ENCODE measurements at regions of chr17 and their contacts with region 1.

Region 1: DNA sequence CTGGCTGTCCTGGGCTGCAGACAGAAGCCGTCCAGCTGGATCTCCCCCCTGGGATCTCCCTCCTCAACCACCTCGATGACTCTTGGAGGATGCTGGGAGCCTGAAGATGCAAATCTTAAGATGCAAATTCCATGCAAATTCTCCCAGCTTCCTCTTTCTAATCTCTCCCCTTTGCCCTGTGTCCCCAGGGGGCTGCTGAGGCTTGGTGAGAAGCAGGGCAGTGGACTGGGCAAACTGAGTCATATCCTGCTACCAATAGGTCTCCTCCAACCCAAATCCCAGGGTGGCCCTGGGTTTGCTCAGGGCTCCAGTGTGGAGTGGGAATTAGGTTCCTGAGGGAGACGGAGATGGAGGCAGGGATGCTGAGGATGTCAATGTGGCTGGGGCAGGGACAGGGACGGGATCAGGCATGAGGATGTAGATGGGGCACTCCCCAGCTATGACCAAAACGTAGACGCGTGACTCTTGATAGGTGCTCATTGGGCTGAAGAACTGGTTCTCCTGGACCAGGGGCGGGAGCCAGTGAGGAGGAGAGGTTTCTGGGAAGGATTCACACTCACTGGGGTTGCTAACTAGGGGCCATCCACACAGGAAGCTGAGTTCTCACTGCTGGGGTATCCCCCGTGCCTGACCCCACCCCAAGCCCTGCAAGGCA is 3.6 kb upstream of the ALOX12B start:
- DNase-seq: no peak
- ATAC-seq: no peak
- H3K4me3 Mint-ChIP-seq: no peak overlapping the region
- H3K27ac Mint-ChIP-seq: no peak overlapping the region
- H3K4me1 Mint-ChIP-seq: peaks cover 6% of the 10 kb centered on the region
- H3K27me3 Mint-ChIP-seq: peaks cover 31% of the 10 kb centered on the region

Region 2: DNA sequence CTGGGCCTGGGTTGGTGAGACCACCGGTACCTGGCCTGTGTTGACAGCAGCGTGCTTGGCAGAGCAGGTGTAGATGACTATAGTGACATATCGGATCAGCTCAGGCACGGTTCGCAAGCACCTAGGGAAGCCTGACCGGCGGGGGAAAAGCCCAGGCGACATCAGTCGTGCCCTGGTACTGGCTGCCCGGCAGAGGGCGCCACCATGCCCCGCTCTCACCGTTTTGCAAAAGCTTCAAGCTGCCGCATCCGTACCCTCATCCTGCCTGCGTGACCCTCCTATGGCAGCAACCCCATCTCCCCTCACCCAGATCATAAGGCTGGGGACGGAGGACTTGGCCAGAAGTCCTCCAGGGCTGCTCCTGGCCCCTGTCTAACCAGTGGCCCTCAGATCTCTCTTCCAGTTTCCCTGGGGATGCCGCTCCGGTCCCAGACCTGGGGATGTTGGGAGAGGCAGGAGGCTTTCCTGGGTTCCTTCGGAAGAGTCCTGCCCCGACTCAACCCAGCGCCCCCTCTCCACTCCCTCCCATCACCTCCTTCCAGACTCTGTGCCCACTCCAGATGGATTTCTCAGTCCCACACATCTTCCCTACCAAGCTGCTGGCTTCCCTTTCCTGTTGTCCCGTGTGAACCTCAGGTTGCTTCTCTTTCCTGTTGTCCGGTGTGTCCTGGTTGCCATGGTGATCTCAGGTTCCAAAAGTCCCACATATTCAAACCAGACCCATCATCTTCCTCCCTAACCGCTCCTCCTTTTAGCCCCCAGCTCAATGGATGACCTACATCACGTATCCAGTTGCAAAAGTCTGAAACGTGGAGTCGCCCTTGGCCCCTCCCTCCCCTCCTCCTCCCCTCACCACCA is 17.3 kb before region 1 on chr17:
- CTCF ChIA-PET with region 1: interaction called, 85 read pairs
- DNase-seq: peak; percentile 87
- ATAC-seq: peak; percentile 86
- H3K4me3 Mint-ChIP-seq: peak overlapping the region; percentile 37
- H3K27ac Mint-ChIP-seq: no peak overlapping the region
- H3K4me1 Mint-ChIP-seq: peaks cover 17% of the 10 kb centered on the region
- H3K27me3 Mint-ChIP-seq: peaks cover 61% of the 10 kb centered on the region

Region 3: GRCh38 chr17:8079291-8080207 is 11.6 kb before region 1 on chr17:
- CTCF ChIA-PET with region 1: interaction called, 85 read pairs
- DNase-seq: peak; percentile 85
- ATAC-seq: peak; percentile 86
- H3K4me3 Mint-ChIP-seq: peak overlapping the region; percentile 87
- H3K27ac Mint-ChIP-seq: peak overlapping the region; percentile 81
- H3K4me1 Mint-ChIP-seq: peaks cover 12% of the 10 kb centered on the region
- H3K27me3 Mint-ChIP-seq: peaks cover 20% of the 10 kb centered on the region

Region 4: GRCh38 chr17:8109661-8110464 is 18.7 kb after region 1 on chr17:
- CTCF ChIA-PET with region 1: interaction called, 107 read pairs
- DNase-seq: peak; percentile 80
- ATAC-seq: peak; percentile 99
- H3K4me3 Mint-ChIP-seq: no peak overlapping the region
- H3K27ac Mint-ChIP-seq: no peak overlapping the region
- H3K4me1 Mint-ChIP-seq: peaks cover 8% of the 10 kb centered on the region
- H3K27me3 Mint-ChIP-seq: peaks cover 37% of the 10 kb centered on the region

Region 5: DNA sequence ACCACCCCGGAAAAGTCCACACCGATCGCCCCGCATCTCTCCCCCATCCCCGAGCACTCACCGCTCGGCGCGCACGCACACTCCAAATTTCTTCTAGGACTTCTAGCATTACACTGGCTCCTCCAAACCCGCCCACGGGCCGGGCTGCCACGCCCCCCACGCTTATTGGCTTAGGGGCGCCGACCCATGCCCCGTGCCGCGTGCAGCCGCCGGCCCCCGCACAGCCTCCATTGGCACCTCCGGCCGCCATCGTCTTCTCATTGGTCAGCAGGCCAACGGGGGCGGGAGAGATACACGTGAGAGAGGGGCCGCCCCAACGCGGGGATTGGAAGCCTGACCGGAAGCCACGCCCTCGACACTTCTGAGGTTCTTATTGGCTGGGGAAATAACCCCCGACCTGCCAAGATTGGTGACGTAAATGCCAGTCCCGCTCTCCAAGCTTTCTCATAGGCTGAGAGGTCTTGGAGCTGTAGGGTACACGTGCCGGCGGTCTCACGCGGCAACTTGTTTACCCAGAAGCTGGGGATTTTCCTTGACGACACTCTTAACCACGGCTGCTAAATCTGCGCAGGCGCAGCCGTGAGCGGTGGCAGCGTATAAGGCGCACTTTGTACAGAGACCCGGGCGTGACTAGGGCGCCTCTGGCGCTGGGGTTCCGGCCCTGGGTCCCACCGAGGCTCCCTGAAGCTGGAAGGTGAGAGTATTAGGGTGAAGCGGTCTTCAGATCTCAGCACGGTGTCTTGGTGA is 65.3 kb after region 1 on chr17:
- CTCF ChIA-PET with region 1: interaction called, 10 read pairs
- DNase-seq: peak; percentile 100
- ATAC-seq: peak; percentile 79
- H3K4me3 Mint-ChIP-seq: no peak overlapping the region
- H3K27ac Mint-ChIP-seq: no peak overlapping the region
- H3K4me1 Mint-ChIP-seq: peaks cover 43% of the 10 kb centered on the region
- H3K27me3 Mint-ChIP-seq: no peaks in the 10 kb centered on the region

Measured in activated CD8-positive, alpha-beta memory T cell treated with anti-CD3 and anti-CD28 coated beads, Interleukin-2, amount 10 ng/mL, durations not matched to agents 7 days and 5 days (primary cell).